ENCODE measurements at regions of chr1 and their contacts with region 1.

Region 1: GRCh38 chr1:95084317-95085176 is 11.8 kb upstream of the ALG14 start:
- DNase-seq: peak in 4 of 5 donors; percentile 16 to 34 (median 24)
- H3K4me3 ChIP-seq: no peak overlapping the region
- H3K4me3 Mint-ChIP-seq: no peak overlapping the region
- H3K27ac ChIP-seq: no peak overlapping the region
- H3K27ac Mint-ChIP-seq: no peak overlapping the region
- H3K4me1 ChIP-seq: no peaks in the 10 kb centered on the region
- H3K4me1 Mint-ChIP-seq: peaks cover 0 to 2% (median 0%) of the 10 kb centered on the region in 4 donors
- H3K27me3 ChIP-seq: no peaks in the 10 kb centered on the region
- H3K27me3 Mint-ChIP-seq: peaks cover 8 to 9% of the 10 kb centered on the region in 2 donors

Region 2: GRCh38 chr1:95033843-95034242 is 50.7 kb before region 1 on chr1:
- CTCF ChIA-PET with region 1: no interaction called
- POLR2A ChIA-PET with region 1: no interaction called
- intact Hi-C with region 1: no loop called
- DNase-seq: no peak
- H3K4me3 ChIP-seq: no peak overlapping the region
- H3K4me3 Mint-ChIP-seq: no peak overlapping the region
- H3K27ac ChIP-seq: no peak overlapping the region
- H3K27ac Mint-ChIP-seq: no peak overlapping the region
- H3K4me1 ChIP-seq: no peaks in the 10 kb centered on the region
- H3K4me1 Mint-ChIP-seq: no peaks in the 10 kb centered on the region
- H3K27me3 ChIP-seq: no peaks in the 10 kb centered on the region
- H3K27me3 Mint-ChIP-seq: no peaks in the 10 kb centered on the region

Region 3: GRCh38 chr1:95067062-95067461 is 17.5 kb before region 1 on chr1:
- CTCF ChIA-PET with region 1: interaction called, 48 read pairs
- POLR2A ChIA-PET with region 1: no interaction called
- intact Hi-C with region 1: no loop called
- DNase-seq: no peak
- H3K4me3 ChIP-seq: no peak overlapping the region
- H3K4me3 Mint-ChIP-seq: no peak overlapping the region
- H3K27ac ChIP-seq: no peak overlapping the region
- H3K27ac Mint-ChIP-seq: no peak overlapping the region
- H3K4me1 ChIP-seq: peaks cover 6% of the 10 kb centered on the region
- H3K4me1 Mint-ChIP-seq: peaks cover 5 to 10% (median 8%) of the 10 kb centered on the region in 4 donors
- H3K27me3 ChIP-seq: no peaks in the 10 kb centered on the region
- H3K27me3 Mint-ChIP-seq: no peaks in the 10 kb centered on the region

Region 4: DNA sequence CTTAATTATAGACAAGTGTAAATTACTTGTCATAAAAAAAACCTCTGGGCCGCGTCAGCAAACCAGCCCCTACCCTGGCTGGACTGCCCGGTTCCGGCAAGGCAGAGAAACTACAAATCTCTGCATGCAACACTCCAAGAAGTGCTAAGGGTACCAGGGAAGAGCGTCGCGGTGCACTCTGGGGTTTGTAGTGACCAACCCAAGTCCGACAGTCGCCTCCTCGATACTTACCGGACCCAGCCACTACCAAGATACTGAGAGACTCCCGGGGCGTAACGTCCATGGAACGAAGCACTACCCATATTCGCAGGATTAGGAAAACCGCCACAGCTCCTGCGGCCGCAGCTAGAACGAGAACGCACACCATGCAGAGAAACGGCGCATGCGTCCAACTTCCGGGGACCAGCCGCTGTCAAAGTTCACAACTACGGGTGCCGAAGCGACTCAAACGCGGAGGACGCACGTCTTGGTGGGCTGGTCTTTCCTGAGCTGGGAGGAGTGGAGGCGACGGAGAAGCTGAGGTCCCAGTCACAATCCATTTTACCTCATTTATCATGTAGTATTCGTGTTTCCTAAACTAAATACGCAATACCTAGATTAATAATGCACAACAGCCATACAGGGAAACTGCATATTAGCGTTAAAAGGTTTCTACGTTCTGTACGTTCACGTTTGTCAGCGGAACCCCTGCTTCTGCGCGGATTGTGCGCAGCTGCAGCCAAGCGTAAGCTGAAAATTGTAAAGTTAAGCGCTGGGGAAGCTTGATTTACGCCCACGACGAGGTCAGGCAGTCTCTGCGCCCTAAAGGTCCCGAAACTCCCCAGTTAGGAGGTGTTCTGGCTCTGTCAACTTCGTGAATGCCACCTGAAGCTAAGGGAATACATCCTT is 11.8 kb before region 1 on chr1 and contains the start of gene ALG14:
- CTCF ChIA-PET with region 1: interaction called, 48 read pairs
- POLR2A ChIA-PET with region 1: interaction called, 7 read pairs
- intact Hi-C with region 1: no loop called
- DNase-seq: peak; percentile 94 to 96 (median 95)
- H3K4me3 ChIP-seq: peak within 1 kb of the TSS; percentile 93 to 96
- H3K4me3 Mint-ChIP-seq: peak within 1 kb of the TSS; percentile 96 to 99 (median 98)
- H3K27ac ChIP-seq: peak within 1 kb of the TSS; percentile 83
- H3K27ac Mint-ChIP-seq: peak within 1 kb of the TSS; percentile 96 to 99 (median 98)
- H3K4me1 ChIP-seq: peaks cover 14% of the 10 kb centered on the region
- H3K4me1 Mint-ChIP-seq: peaks cover 12 to 21% (median 18%) of the 10 kb centered on the region in 4 donors
- H3K27me3 ChIP-seq: no peaks in the 10 kb centered on the region
- H3K27me3 Mint-ChIP-seq: peaks cover 2 to 5% of the 10 kb centered on the region in 2 donors
- total RNA-seq, gene ALG14: 1.1 to 3.2 TPM

Region 5: DNA sequence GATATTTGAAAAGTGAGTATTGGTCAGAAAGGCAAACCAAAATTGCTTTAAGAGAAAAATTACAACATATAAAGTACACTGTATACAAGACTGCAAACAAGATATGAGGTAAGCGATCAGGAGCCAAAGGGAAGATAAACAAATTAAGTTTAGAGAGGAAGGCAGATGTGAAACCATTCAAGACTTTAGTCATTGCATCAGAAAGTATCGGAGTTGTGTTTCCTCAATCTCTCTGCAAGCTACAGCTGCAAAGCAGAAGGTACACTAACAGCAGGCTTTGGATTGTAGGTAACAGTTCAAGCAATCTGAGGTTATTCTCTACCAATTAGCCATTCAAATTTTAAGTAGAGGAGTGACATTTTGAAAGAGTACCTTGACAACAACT is 11.3 kb after region 1 on chr1:
- CTCF ChIA-PET with region 1: interaction called, 22 read pairs
- POLR2A ChIA-PET with region 1: interaction called, 4 read pairs
- intact Hi-C with region 1: no loop called
- DNase-seq: no peak
- H3K4me3 ChIP-seq: no peak overlapping the region
- H3K4me3 Mint-ChIP-seq: no peak overlapping the region
- H3K27ac ChIP-seq: no peak overlapping the region
- H3K27ac Mint-ChIP-seq: no peak overlapping the region
- H3K4me1 ChIP-seq: no peaks in the 10 kb centered on the region
- H3K4me1 Mint-ChIP-seq: no peaks in the 10 kb centered on the region
- H3K27me3 ChIP-seq: no peaks in the 10 kb centered on the region
- H3K27me3 Mint-ChIP-seq: peaks cover 4 to 9% of the 10 kb centered on the region in 2 donors

Region 6: DNA sequence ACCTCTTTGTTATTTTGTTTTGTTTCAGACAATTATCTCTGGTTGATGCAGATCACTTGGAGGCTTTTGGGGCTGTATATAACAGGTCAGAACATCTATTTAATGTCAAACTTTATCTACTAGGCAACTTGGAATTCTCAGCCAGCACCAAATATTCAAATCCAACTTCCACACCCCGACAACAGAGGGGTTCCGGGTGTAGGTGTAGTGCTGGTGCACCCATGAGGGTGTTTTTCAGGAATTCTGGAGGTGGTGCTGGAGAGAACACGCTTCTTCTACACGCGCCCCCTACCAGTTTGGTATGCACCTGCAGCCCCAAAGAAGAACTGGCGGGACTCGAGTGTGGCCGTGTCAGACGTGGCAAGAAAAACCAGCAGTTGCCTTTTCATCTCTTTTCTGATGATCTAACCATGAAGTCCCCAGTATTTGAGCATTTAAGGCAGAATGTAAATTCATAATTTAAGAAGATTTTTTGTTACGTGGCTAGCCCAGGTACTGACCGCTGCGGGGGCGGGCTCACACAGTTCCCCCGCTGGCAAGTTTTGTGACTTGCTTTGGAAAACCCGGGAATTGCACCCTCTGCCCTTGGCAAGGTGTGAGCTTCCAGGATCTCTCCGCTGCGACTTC is 32.1 kb after region 1 on chr1:
- CTCF ChIA-PET with region 1: interaction called, 7 read pairs
- POLR2A ChIA-PET with region 1: no interaction called
- intact Hi-C with region 1: loop called (anchors 1 kb)
- DNase-seq: peak; percentile 39 to 61 (median 49)
- H3K4me3 ChIP-seq: peak overlapping the region; percentile 43 to 53
- H3K4me3 Mint-ChIP-seq: peak overlapping the region; percentile 90 to 93 (median 93)
- H3K27ac ChIP-seq: no peak overlapping the region
- H3K27ac Mint-ChIP-seq: peak overlapping the region in 6 of 7 donors; percentile 51 to 88 (median 80)
- H3K4me1 ChIP-seq: peaks cover 12% of the 10 kb centered on the region
- H3K4me1 Mint-ChIP-seq: peaks cover 4 to 16% (median 9%) of the 10 kb centered on the region in 4 donors
- H3K27me3 ChIP-seq: peaks cover 18% of the 10 kb centered on the region
- H3K27me3 Mint-ChIP-seq: peaks cover 17 to 33% of the 10 kb centered on the region in 2 donors

Measured in CD4-positive, alpha-beta memory T cell (primary cell).